Caco-2 (cell line): ENCODE measurements at regions of chr1 and their contacts with region 1.

Region 1: GRCh38 chr1:112706908-112707663 is at the start of gene RHOC:
- DNase-seq: peak; percentile 89
- H3K4me3 ChIP-seq: peak within 1 kb of the TSS; percentile 84
- H3K4me3 Mint-ChIP-seq: peak within 1 kb of the TSS; percentile 88
- H3K27ac Mint-ChIP-seq: peak within 1 kb of the TSS; percentile 69
- H3K4me1 ChIP-seq: peaks cover 29% of the 10 kb centered on the region
- H3K4me1 Mint-ChIP-seq: peaks cover 11% of the 10 kb centered on the region
- H3K27me3 ChIP-seq: no peaks in the 10 kb centered on the region
- H3K27me3 Mint-ChIP-seq: no peaks in the 10 kb centered on the region
- CTCF ChIP-seq: peak; percentile 74 to 82
- total RNA-seq, gene RHOC: 128 and 134 TPM in 2 replicates

Region 2: GRCh38 chr1:112501810-112502641 is 205.1 kb before region 1 on chr1:
- CTCF ChIA-PET with region 1: no interaction called
- POLR2A ChIA-PET with region 1: no interaction called
- intact Hi-C with region 1: loop called (anchors 5 kb)
- DNase-seq: peak; percentile 56 to 63
- H3K4me3 ChIP-seq: peak overlapping the region; percentile 40
- H3K4me3 Mint-ChIP-seq: peak overlapping the region; percentile 66
- H3K27ac Mint-ChIP-seq: no peak overlapping the region
- H3K4me1 ChIP-seq: no peaks in the 10 kb centered on the region
- H3K4me1 Mint-ChIP-seq: no peaks in the 10 kb centered on the region
- H3K27me3 ChIP-seq: no peaks in the 10 kb centered on the region
- H3K27me3 Mint-ChIP-seq: peaks cover 4% of the 10 kb centered on the region
- CTCF ChIP-seq: peak; percentile 20 to 33

Region 3: GRCh38 chr1:112674439-112674985 is 32.6 kb before region 1 on chr1 and contains the start of gene MOV10:
- CTCF ChIA-PET with region 1: interaction called, 7 read pairs
- POLR2A ChIA-PET with region 1: interaction called, 6 read pairs
- intact Hi-C with region 1: loop called (anchors 1 kb)
- DNase-seq: peak; percentile 68 to 75
- H3K4me3 ChIP-seq: peak within 1 kb of the TSS; percentile 53
- H3K4me3 Mint-ChIP-seq: peak within 1 kb of the TSS; percentile 88
- H3K27ac Mint-ChIP-seq: peak within 1 kb of the TSS; percentile 98
- H3K4me1 ChIP-seq: peaks cover 14% of the 10 kb centered on the region
- H3K4me1 Mint-ChIP-seq: peaks cover 13% of the 10 kb centered on the region
- H3K27me3 ChIP-seq: no peaks in the 10 kb centered on the region
- H3K27me3 Mint-ChIP-seq: no peaks in the 10 kb centered on the region
- CTCF ChIP-seq: no peak
- total RNA-seq, gene MOV10: 89.8 and 102 TPM in 2 replicates